ENCODE measurements at regions of chr10 and their contacts with region 1.

Region 1: DNA sequence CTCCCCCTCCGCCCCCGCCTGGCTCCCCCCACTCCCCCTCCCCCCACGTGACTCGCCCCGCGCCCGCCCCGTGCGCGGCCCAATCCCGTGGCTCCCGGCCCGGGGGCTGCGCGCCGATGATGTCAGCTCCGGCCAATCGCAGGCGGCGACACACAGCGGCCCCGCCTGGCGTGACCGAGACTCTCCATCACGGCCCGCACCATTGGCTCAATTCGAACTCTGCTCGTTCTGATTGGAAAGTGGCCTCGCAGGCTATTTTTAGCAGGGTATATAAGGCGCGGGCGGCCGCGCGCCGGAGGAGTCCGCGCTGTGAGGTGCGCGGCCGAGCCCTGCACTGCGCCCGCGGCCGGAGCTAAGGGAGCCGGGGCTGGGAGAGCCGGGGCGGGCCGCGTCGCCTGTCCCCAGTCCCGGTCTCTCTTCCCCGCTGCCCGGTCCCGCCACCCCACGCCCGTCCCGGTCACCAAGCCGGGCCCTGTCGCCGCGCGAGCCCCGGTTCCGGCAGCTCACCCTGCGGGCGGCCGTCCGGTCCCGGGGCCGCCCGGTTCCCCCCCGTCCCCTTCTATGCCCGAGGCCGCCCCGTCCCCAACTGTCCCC is 345 bp upstream of the KLF6 start:
- H3K4me3 Mint-ChIP-seq: peak overlapping the region; percentile 86
- H3K27ac Mint-ChIP-seq: peak overlapping the region; percentile 99
- H3K4me1 Mint-ChIP-seq: peaks cover 28% of the 10 kb centered on the region
- H3K27me3 Mint-ChIP-seq: no peaks in the 10 kb centered on the region

Region 2: DNA sequence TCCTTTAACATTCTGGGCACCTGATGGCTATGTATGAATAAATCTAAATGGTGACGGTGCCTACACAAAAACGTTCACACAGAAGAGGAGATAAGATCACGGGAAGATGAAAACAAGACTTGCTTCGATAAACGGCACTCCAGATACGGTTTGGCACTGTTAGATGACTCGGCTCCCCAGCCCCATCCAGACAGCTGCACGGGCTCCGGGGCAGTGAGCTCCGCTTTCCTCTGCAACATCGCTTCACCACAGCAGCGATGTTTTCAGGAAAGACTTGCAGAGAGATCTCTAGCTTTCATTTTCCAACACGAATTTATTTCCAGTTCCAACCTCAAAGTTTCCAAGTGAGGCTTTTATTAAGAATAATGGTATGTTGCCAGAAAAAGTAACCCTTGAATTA is 132.5 kb before region 1 on chr10:
- intact Hi-C with region 1: no loop called
- H3K4me3 Mint-ChIP-seq: no peak overlapping the region
- H3K27ac Mint-ChIP-seq: no peak overlapping the region
- H3K4me1 Mint-ChIP-seq: peaks cover 22% of the 10 kb centered on the region
- H3K27me3 Mint-ChIP-seq: peaks cover 22% of the 10 kb centered on the region

Region 3: GRCh38 chr10:3852147-3852904 is 67.0 kb after region 1 on chr10:
- intact Hi-C with region 1: loop called (anchors 1 kb)
- H3K4me3 Mint-ChIP-seq: no peak overlapping the region
- H3K27ac Mint-ChIP-seq: peak overlapping the region; percentile 99
- H3K4me1 Mint-ChIP-seq: peaks cover 55% of the 10 kb centered on the region
- H3K27me3 Mint-ChIP-seq: no peaks in the 10 kb centered on the region

Region 4: GRCh38 chr10:4051011-4051640 is 265.8 kb after region 1 on chr10:
- intact Hi-C with region 1: loop called (anchors 5 kb)
- H3K4me3 Mint-ChIP-seq: peak overlapping the region; percentile 56
- H3K27ac Mint-ChIP-seq: peak overlapping the region; percentile 84
- H3K4me1 Mint-ChIP-seq: peaks cover 42% of the 10 kb centered on the region
- H3K27me3 Mint-ChIP-seq: no peaks in the 10 kb centered on the region

Region 5: DNA sequence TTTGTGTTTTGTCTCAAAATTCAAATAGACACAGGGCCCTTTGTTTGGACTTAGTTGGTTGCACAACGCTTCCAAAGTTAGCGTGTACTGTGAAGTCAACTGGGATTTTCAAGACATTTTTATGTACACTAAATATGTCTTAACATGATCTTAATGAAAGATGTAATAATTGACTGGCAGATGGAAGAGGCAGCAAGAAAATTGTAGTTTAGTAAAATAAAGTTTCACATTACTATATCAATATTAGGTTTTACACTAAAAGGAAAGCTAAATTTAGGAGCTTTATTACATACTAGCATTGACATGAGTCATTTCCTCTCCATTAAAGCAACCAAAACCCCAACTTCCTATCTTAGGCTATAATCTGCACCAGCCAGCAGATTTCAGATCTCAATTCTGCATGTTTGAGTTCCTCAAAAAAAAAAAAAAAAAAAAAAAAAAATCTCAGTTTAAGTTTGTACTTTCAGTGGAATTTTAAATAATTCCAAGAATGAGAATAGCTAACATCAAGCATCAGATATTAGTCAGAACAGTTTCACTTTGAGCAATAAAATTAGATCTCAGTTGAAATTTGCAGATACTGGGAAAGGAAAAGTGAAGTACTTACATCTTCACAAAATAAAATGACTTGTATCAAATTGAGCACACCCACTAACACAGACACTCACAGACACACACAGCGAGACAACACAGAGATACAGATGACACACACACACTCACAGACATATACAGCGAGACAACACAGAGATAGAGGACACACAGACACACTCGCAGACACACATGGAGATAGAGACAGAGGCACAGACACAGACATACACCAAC is 346.3 kb after region 1 on chr10:
- intact Hi-C with region 1: loop called (anchors 5 kb)
- H3K4me3 Mint-ChIP-seq: no peak overlapping the region
- H3K27ac Mint-ChIP-seq: no peak overlapping the region
- H3K4me1 Mint-ChIP-seq: peaks cover 18% of the 10 kb centered on the region
- H3K27me3 Mint-ChIP-seq: no peaks in the 10 kb centered on the region

Measured in dendritic cell treated with granulocyte-macrophage colony-stimulating factor and Interleukin-4, amounts not matched to agents 40 ng/mL and 50 ng/mL, for 4 days (primary cell).